ENCODE measurements at regions of chr3 and their contacts with region 1.

Region 1: GRCh38 chr3:172586436-172586835 is 63.2 kb upstream of the TNFSF10 start:
- DNase-seq: no peak
- ATAC-seq: no peak

Region 2: GRCh38 chr3:172516318-172517214 is 69.9 kb before region 1 on chr3:
- intact Hi-C with region 1: loop called (anchors 5 kb)
- DNase-seq: no peak
- ATAC-seq: peak; percentile 91